MCF 10A (cell line): ENCODE measurements at regions of chr1 and their contacts with region 1.

Region 1: DNA sequence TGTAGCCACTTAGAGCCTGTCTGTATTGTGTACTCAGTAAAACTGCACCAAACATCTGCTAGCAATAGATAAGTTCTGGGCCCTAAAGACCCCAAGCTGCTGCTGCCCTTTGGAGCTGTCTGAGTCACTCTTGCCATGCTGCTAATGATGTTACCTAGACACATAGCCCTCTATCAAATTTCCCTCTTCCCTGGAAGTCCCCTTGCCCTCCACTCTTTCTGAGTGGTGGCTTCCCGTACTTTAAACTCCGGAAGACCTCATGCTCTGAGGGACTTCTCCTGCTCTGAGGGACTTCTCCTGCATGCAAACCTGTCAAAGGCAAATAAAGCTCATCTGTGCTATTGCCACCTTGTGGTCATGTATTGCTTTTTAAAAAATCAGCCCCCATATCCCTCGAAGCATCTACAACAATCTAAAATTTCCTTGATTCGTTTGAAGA is 34.0 kb downstream of the FH start:
- DNase-seq: peak; percentile 64
- H3K4me3 Mint-ChIP-seq: no peak overlapping the region
- H3K27ac Mint-ChIP-seq: no peak overlapping the region
- H3K4me1 Mint-ChIP-seq: peaks cover 26% of the 10 kb centered on the region
- H3K27me3 Mint-ChIP-seq: no peaks in the 10 kb centered on the region
- CTCF ChIP-seq: peak; percentile 63

Region 2: DNA sequence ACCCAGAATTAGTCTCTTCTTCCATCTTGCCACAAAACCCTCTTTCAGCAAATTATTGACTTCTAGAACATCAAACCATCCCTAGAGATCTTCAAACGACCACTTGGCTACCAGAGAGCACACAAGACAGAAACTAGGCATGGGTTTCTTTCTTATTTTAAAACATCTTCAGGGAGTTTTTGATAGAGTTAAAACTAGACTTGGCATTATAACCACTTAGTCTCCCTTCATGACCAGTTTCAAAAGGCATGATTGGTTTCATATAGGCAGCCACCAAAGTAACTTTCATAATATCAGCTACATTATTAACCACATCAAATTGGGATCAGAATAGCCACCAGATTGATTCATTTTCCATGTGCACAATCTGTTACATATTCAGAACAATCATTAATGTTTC is 505.2 kb before region 1 on chr1:
- CTCF ChIA-PET with region 1: interaction called, 13 read pairs
- POLR2A ChIA-PET with region 1: no interaction called
- intact Hi-C with region 1: no loop called
- DNase-seq: no peak
- H3K4me3 Mint-ChIP-seq: no peak overlapping the region
- H3K27ac Mint-ChIP-seq: no peak overlapping the region
- H3K4me1 Mint-ChIP-seq: no peaks in the 10 kb centered on the region
- H3K27me3 Mint-ChIP-seq: no peaks in the 10 kb centered on the region
- CTCF ChIP-seq: no peak

Region 3: GRCh38 chr1:241311056-241311746 is 174.4 kb before region 1 on chr1:
- CTCF ChIA-PET with region 1: interaction called, 7 read pairs
- POLR2A ChIA-PET with region 1: interaction called, 5 read pairs
- intact Hi-C with region 1: loop called (anchors 1 kb)
- DNase-seq: peak; percentile 79
- H3K4me3 Mint-ChIP-seq: peak overlapping the region; percentile 0
- H3K27ac Mint-ChIP-seq: peak overlapping the region; percentile 37
- H3K4me1 Mint-ChIP-seq: peaks cover 15% of the 10 kb centered on the region
- H3K27me3 Mint-ChIP-seq: no peaks in the 10 kb centered on the region
- CTCF ChIP-seq: peak; percentile 62

Region 4: DNA sequence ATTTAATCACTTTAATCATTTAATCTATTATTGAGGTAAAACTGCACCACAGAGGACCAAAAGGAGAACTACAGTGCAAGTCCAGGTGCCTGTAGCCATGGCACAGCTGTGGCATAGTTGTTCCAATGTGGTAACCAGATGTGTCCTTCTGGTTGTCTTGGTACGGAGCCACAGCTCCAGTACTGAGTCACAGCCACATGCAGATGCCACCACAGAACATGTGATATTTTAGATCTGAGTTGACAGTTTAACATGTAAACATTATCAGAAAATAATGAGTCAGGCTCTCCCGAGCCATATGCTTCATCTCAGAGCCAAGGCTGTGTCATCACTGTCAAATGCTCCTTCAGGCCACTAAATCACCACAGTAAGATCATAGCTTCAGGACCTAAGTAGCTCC is 72.2 kb before region 1 on chr1:
- CTCF ChIA-PET with region 1: interaction called, 5 read pairs
- POLR2A ChIA-PET with region 1: no interaction called
- intact Hi-C with region 1: loop called (anchors 5 kb)
- DNase-seq: peak; percentile 79
- H3K4me3 Mint-ChIP-seq: no peak overlapping the region
- H3K27ac Mint-ChIP-seq: no peak overlapping the region
- H3K4me1 Mint-ChIP-seq: peaks cover 19% of the 10 kb centered on the region
- H3K27me3 Mint-ChIP-seq: no peaks in the 10 kb centered on the region
- CTCF ChIP-seq: no peak

Region 5: GRCh38 chr1:241464985-241465384 is 20.6 kb before region 1 on chr1:
- CTCF ChIA-PET with region 1: interaction called, 34 read pairs
- POLR2A ChIA-PET with region 1: no interaction called
- intact Hi-C with region 1: no loop called
- DNase-seq: no peak
- H3K4me3 Mint-ChIP-seq: no peak overlapping the region
- H3K27ac Mint-ChIP-seq: no peak overlapping the region
- H3K4me1 Mint-ChIP-seq: peaks cover 7% of the 10 kb centered on the region
- H3K27me3 Mint-ChIP-seq: no peaks in the 10 kb centered on the region
- CTCF ChIP-seq: no peak

Region 6: GRCh38 chr1:241499910-241500309 is 14.3 kb after region 1 on chr1:
- CTCF ChIA-PET with region 1: interaction called, 19 read pairs
- POLR2A ChIA-PET with region 1: interaction called, 4 read pairs
- intact Hi-C with region 1: no loop called
- DNase-seq: peak; percentile 65
- H3K4me3 Mint-ChIP-seq: no peak overlapping the region
- H3K27ac Mint-ChIP-seq: no peak overlapping the region
- H3K4me1 Mint-ChIP-seq: no peaks in the 10 kb centered on the region
- H3K27me3 Mint-ChIP-seq: no peaks in the 10 kb centered on the region
- CTCF ChIP-seq: peak; percentile 84

Region 7: GRCh38 chr1:241810769-241811405 is 325.3 kb after region 1 on chr1:
- CTCF ChIA-PET with region 1: no interaction called
- POLR2A ChIA-PET with region 1: no interaction called
- intact Hi-C with region 1: no loop called
- DNase-seq: no peak
- H3K4me3 Mint-ChIP-seq: no peak overlapping the region
- H3K27ac Mint-ChIP-seq: no peak overlapping the region
- H3K4me1 Mint-ChIP-seq: peaks cover 15% of the 10 kb centered on the region
- H3K27me3 Mint-ChIP-seq: no peaks in the 10 kb centered on the region
- CTCF ChIP-seq: no peak